ENCODE measurements at regions of chrX and their contacts with region 1.

Region 1: GRCh38 chrX:130916636-130917422 is 13.8 kb upstream of the ENOX2 start:
- DNase-seq: peak; percentile 35
- ATAC-seq: peak; percentile 85
- H3K4me3 ChIP-seq: no peak overlapping the region
- H3K27ac ChIP-seq: no peak overlapping the region
- H3K4me1 ChIP-seq: no peaks in the 10 kb centered on the region
- H3K27me3 ChIP-seq: no peaks in the 10 kb centered on the region
- CTCF ChIP-seq: peak; percentile 83

Region 2: GRCh38 chrX:130330706-130331105 is 586.1 kb before region 1 on chrX:
- CTCF ChIA-PET with region 1: interaction called, 3 read pairs
- POLR2A ChIA-PET with region 1: no interaction called
- in situ Hi-C with region 1: no loop called
- intact Hi-C with region 1: loop called (anchors 5 kb)
- DNase-seq: peak; percentile 47
- ATAC-seq: peak; percentile 98
- H3K4me3 ChIP-seq: no peak overlapping the region
- H3K27ac ChIP-seq: no peak overlapping the region
- H3K4me1 ChIP-seq: peaks cover 3% of the 10 kb centered on the region; the same call in 1 of the 2 replicates
- H3K27me3 ChIP-seq: peaks cover 3% of the 10 kb centered on the region
- CTCF ChIP-seq: peak; percentile 91

Region 3: DNA sequence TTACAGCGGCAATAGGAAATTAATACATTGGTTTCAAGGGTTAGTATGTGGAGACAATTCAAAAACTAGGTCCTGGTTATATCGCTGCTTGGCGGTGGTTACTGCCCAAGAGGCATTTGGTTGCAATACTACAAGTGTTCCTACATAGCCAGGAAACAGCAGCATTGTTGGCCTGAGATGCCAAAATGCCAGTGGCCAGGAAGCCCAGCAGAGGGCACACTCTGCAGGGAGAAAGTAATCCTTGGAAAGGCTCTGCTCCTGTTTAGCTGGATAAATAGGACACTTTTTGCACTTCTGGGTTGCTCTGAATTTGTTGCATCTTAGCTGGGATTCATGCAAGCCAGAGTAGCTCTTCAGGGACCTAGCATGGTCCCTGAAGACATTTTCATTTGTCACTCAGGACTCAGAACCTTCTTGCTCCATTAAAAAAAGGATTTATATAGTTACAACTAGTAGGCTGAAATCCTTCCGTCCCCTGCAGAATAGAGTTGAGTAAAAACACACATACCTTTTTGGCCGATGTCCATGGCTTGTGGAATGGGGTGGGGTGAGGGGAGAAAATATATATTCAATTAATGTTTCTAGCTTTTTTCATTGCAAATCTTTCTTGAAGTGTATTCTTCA is 523.3 kb before region 1 on chrX:
- CTCF ChIA-PET with region 1: interaction called, 6 read pairs
- POLR2A ChIA-PET with region 1: no interaction called
- in situ Hi-C with region 1: no loop called
- intact Hi-C with region 1: loop called (anchors 1 kb)
- DNase-seq: peak; percentile 20
- ATAC-seq: peak; percentile 94
- H3K4me3 ChIP-seq: no peak overlapping the region
- H3K27ac ChIP-seq: no peak overlapping the region
- H3K4me1 ChIP-seq: no peaks in the 10 kb centered on the region
- H3K27me3 ChIP-seq: peaks cover 5% of the 10 kb centered on the region; the same call in 1 of the 2 replicates
- CTCF ChIP-seq: peak; percentile 88

Region 4: GRCh38 chrX:130539721-130540321 is 377.0 kb before region 1 on chrX:
- CTCF ChIA-PET with region 1: interaction called, 7 read pairs
- POLR2A ChIA-PET with region 1: no interaction called
- in situ Hi-C with region 1: no loop called
- intact Hi-C with region 1: loop called (anchors 2 kb)
- DNase-seq: peak; percentile 17
- ATAC-seq: 0 out of 2 replicates have a peak, but pooled peaks have one; percentile 75
- H3K4me3 ChIP-seq: no peak overlapping the region
- H3K27ac ChIP-seq: no peak overlapping the region
- H3K4me1 ChIP-seq: no peaks in the 10 kb centered on the region
- H3K27me3 ChIP-seq: peaks cover 9% of the 10 kb centered on the region
- CTCF ChIP-seq: peak; percentile 91

Region 5: GRCh38 chrX:130575831-130576389 is 340.9 kb before region 1 on chrX:
- CTCF ChIA-PET with region 1: interaction called, 12 read pairs
- POLR2A ChIA-PET with region 1: no interaction called
- in situ Hi-C with region 1: no loop called
- intact Hi-C with region 1: loop called (anchors 10 kb)
- DNase-seq: peak; percentile 42
- ATAC-seq: peak; percentile 78
- H3K4me3 ChIP-seq: no peak overlapping the region
- H3K27ac ChIP-seq: no peak overlapping the region
- H3K4me1 ChIP-seq: no peaks in the 10 kb centered on the region
- H3K27me3 ChIP-seq: no peaks in the 10 kb centered on the region
- CTCF ChIP-seq: peak; percentile 90

Measured in Panc1 (cell line).